MCF 10A (cell line): ENCODE measurements at regions of chr5 and their contacts with region 1.

Region 1: DNA sequence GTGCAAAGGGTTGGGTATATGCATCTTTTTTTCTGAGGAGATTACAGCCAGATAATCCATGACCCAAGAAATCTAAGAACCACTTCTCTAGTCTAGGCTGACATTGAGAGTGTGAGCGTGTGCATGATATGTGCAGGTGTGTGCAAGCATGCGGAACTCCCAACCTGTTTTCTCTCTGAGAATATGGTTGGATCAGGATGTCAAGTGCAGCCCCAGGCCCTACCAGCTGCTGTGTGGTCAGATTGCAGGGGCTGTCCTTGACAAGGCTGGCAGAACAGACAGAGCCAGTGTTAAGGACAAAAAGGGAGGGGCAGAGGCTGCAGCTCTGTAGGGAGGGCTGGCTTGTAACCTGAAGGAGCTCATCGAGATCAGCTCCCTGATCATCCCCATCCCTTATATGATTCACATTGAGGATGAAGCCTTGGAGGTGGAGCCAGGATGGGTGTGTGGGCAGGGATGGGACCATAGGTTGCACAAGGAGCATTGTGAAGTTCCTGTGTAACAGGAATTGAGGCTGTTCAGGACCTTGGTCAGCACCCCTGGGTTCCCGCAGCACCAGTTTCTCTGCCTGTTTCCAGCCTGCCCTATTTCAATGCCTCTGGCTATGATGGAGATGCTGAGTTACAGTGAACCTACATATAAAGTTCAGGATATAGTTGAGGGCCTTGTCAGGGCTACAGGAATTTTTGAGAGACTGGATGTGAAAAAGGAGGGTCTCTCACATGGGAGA is 52.6 kb upstream of the ARAP3 start:
- DNase-seq: peak; percentile 81
- H3K4me3 Mint-ChIP-seq: no peak overlapping the region
- H3K27ac Mint-ChIP-seq: no peak overlapping the region
- H3K4me1 Mint-ChIP-seq: no peaks in the 10 kb centered on the region
- H3K27me3 Mint-ChIP-seq: peaks cover 48% of the 10 kb centered on the region
- CTCF ChIP-seq: no peak

Region 2: GRCh38 chr5:141685591-141685990 is 49.1 kb before region 1 on chr5:
- CTCF ChIA-PET with region 1: no interaction called
- POLR2A ChIA-PET with region 1: no interaction called
- intact Hi-C with region 1: no loop called
- DNase-seq: no peak
- H3K4me3 Mint-ChIP-seq: no peak overlapping the region
- H3K27ac Mint-ChIP-seq: no peak overlapping the region
- H3K4me1 Mint-ChIP-seq: peaks cover 13% of the 10 kb centered on the region
- H3K27me3 Mint-ChIP-seq: peaks cover 20% of the 10 kb centered on the region
- CTCF ChIP-seq: no peak

Region 3: DNA sequence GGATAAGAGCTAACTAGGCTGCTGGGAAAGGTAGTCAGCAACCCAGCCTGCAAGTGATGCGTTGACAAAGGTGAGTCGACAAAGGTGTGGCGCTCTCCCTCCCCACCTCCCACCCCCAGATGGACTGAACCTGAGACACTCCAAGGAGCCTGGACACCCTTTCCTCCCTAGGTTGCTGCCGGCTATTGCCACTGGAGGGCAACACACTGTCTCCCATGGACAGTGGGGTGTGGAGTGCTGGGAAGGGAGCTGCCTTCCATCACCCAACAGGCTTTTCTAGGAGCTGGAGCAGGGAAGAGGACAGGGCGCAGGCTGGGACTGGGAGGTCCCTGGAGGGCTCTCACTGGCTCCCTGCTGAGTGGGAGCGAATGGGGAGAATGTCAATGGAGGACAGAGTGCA is 22.7 kb after region 1 on chr5:
- CTCF ChIA-PET with region 1: interaction called, 3 read pairs
- POLR2A ChIA-PET with region 1: interaction called, 3 read pairs
- intact Hi-C with region 1: loop called (anchors 2 kb)
- DNase-seq: peak; percentile 71
- H3K4me3 Mint-ChIP-seq: no peak overlapping the region
- H3K27ac Mint-ChIP-seq: no peak overlapping the region
- H3K4me1 Mint-ChIP-seq: no peaks in the 10 kb centered on the region
- H3K27me3 Mint-ChIP-seq: peaks cover 61% of the 10 kb centered on the region
- CTCF ChIP-seq: peak; percentile 49

Region 4: GRCh38 chr5:141779503-141779973 is 44.9 kb after region 1 on chr5:
- CTCF ChIA-PET with region 1: interaction called, 5 read pairs
- POLR2A ChIA-PET with region 1: no interaction called
- intact Hi-C with region 1: loop called (anchors 1 kb)
- DNase-seq: peak; percentile 70
- H3K4me3 Mint-ChIP-seq: no peak overlapping the region
- H3K27ac Mint-ChIP-seq: no peak overlapping the region
- H3K4me1 Mint-ChIP-seq: peaks cover 31% of the 10 kb centered on the region
- H3K27me3 Mint-ChIP-seq: no peaks in the 10 kb centered on the region
- CTCF ChIP-seq: no peak